Heart left ventricle (tissue), 16 donors: ENCODE measurements at regions of chr7 and their contacts with region 1.

Region 1: DNA sequence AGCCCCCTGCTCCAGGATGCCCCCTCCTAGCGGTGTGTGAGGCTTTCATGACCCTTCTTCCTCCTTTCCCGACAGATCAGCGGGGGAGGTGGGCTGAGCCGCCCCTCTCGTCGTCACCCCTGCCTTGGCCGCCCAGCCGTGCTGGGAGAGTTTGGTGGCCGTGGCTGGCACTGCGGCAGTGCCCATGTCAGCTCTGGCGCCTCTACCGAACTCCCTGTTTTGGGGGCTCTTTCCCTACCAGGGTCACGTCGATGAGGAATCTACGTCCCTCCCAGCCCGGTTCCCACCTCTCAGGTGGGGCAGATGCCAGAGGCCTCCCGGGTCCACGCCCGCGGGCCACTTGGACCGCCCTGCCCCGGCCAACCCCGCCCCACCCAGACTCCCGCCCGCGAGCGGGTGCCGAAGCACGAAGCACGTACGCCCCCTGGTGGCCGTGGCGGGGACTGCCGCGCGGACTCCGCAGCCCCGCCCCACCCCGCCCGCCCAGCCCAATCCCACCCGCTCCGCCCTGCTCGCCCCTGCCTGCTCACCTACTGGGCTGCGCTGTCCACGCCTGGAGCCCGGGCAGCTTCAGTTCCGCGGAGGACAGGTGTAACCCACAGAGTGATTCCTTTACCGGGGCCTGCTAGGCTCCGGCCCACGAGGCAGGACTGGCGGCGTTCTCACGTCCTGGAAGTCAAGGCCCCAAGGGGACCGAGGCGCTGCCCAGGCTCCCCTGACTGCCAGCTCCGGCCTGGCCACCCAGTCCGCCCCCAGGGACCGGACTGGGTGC is 127.1 kb downstream of the UBE2H start:
- DNase-seq: peak; percentile 87 to 95 (median 90)
- ATAC-seq: peak; percentile 59 to 88 (median 82)
- H3K4me3 ChIP-seq: peak overlapping the region; percentile 48 to 76 (median 59)
- H3K27ac ChIP-seq: peak overlapping the region in 8 of 12 donors; percentile 14 to 69 (median 48)
- H3K4me1 ChIP-seq: peaks cover 0 to 40% (median 24%) of the 10 kb centered on the region in 12 donors
- H3K27me3 ChIP-seq: no peaks in the 10 kb centered on the region
- CTCF ChIP-seq: peak; percentile 89 to 100 (median 95)
- POLR2A ChIP-seq: peak in 1 of 2 donors; percentile 9

Region 2: GRCh38 chr7:129343099-129343700 is 482.5 kb before region 1 on chr7:
- intact Hi-C with region 1: loop called in 1 of 10 experiments (anchors 10 kb)
- DNase-seq: no peak
- ATAC-seq: no peak
- H3K4me3 ChIP-seq: no peak overlapping the region
- H3K27ac ChIP-seq: no peak overlapping the region
- H3K4me1 ChIP-seq: no peaks in the 10 kb centered on the region
- H3K27me3 ChIP-seq: no peaks in the 10 kb centered on the region
- CTCF ChIP-seq: peak; percentile 52 to 79 (median 66)
- POLR2A ChIP-seq: no peak

Region 3: GRCh38 chr7:129494041-129494440 is 331.6 kb before region 1 on chr7:
- intact Hi-C with region 1: loop called in 1 of 10 experiments (anchors 5 kb)
- DNase-seq: no peak
- ATAC-seq: no peak
- H3K4me3 ChIP-seq: no peak overlapping the region
- H3K27ac ChIP-seq: no peak overlapping the region
- H3K4me1 ChIP-seq: no peaks in the 10 kb centered on the region
- H3K27me3 ChIP-seq: no peaks in the 10 kb centered on the region
- CTCF ChIP-seq: no peak
- POLR2A ChIP-seq: no peak

Region 4: GRCh38 chr7:129649128-129649690 is 176.5 kb before region 1 on chr7:
- intact Hi-C with region 1: no loop called
- DNase-seq: no peak
- ATAC-seq: no peak
- H3K4me3 ChIP-seq: no peak overlapping the region
- H3K27ac ChIP-seq: no peak overlapping the region
- H3K4me1 ChIP-seq: peaks cover 0 to 23% (median 5%) of the 10 kb centered on the region in 12 donors
- H3K27me3 ChIP-seq: no peaks in the 10 kb centered on the region
- CTCF ChIP-seq: no peak
- POLR2A ChIP-seq: no peak

Region 5: DNA sequence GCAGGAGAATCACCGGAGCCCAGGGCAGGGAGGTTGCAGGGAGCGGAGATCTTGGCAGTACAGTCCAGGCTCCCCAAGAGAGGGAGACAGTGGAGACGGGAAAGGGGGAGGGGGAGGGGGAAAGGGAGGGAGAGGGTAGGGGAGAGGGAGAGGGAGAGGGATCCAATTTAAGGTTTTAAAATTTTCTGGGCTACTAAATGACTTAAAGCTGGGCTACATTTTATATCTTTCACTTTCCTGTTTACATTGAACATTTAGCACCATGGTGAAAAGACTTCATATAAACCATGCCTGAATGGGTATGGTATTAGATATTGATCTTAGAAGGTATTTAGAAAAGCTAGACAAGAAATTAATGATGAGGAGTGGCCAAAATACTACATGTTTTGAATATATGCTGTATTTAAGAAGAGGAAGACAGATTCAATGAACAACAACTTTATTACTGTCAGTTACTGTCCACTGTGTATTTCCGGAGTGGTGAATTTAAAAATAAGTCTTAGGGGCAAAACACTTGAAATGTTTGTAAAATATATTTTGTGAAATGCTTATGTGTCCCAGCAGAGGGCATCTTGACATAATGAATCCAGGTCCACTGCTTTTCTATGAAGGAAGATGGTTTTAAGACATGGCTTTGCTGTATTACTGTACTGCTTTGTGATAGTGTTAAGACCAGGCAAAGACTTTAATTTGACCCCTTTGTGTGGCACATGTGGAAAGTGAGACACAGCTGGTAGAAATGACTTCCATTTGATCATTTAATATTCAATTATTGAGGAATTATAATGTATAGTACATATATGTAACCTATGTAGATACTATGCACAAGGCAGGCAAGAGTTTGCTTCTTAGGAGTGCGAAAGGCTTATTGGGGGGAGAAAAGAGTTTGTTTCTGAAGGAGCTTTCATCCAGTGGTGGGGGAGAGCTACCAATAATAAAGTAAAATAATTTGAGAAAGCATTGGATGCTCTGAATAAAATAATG is 161.4 kb before region 1 on chr7:
- intact Hi-C with region 1: loop called in 9 of 10 experiments (anchors 1 to 5 kb)
- DNase-seq: no peak
- ATAC-seq: peak in 2 of 4 donors; percentile 36 to 45
- H3K4me3 ChIP-seq: no peak overlapping the region
- H3K27ac ChIP-seq: no peak overlapping the region
- H3K4me1 ChIP-seq: peaks cover 0 to 6% (median 0%) of the 10 kb centered on the region in 12 donors
- H3K27me3 ChIP-seq: no peaks in the 10 kb centered on the region
- CTCF ChIP-seq: peak in 11 of 12 donors; percentile 16 to 58 (median 46)
- POLR2A ChIP-seq: no peak

Region 6: DNA sequence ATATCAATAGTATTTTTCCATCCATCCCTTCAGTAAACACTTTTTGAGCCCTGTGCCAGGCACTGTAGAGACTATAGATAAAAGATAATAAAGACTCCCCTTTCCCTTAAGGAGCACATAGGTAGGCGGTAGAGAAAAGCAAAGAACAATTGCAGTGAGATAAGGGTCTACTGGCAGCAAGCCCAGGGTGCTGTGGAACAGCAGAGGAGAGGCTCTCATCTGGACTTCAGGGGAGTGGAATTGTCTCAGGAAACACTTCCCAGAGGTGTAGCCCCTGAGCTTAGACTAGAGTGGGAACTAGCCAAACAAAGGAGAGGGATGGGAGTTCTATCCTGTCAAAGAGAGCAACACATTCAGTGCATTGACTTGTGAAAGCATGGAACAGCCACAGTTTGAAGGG is 112.1 kb before region 1 on chr7:
- intact Hi-C with region 1: no loop called
- DNase-seq: no peak
- ATAC-seq: peak in 1 of 4 donors; percentile 22
- H3K4me3 ChIP-seq: no peak overlapping the region
- H3K27ac ChIP-seq: no peak overlapping the region
- H3K4me1 ChIP-seq: peaks cover 0 to 6% (median 0%) of the 10 kb centered on the region in 12 donors
- H3K27me3 ChIP-seq: no peaks in the 10 kb centered on the region
- CTCF ChIP-seq: no peak
- POLR2A ChIP-seq: no peak

Region 7: DNA sequence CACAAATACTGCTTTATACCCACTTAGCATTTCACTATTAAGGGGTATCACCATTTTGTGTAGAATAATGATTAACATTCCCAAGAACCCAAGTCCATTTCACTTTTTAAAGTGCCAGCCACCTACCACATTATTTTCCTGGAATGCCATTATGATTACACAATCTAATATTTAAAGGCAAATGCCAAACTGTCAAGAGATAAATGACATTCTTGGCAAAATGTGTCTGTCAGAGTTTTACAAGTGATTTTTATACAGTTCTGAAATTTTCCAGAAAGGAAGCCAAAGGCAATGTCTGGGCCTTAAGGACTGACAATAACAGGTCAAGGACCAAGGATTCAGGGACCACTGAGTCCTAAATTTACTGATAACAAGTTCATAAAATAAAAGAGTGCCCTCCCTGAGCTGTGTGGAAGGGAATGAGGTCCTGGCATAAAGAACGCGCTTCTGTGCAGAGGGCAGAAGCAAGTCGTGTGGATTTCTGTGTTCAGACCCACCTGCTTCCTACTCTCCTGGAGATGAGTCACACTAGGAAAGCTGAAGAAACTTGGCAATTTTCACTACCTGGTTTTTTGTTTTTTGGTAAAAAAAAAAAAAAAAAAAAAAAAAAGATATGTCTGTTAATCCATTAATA is 60.6 kb after region 1 on chr7:
- intact Hi-C with region 1: no loop called
- DNase-seq: no peak
- ATAC-seq: peak in 3 of 4 donors; percentile 42 to 59 (median 49)
- H3K4me3 ChIP-seq: no peak overlapping the region
- H3K27ac ChIP-seq: peak overlapping the region in 10 of 12 donors; percentile 15 to 69 (median 46)
- H3K4me1 ChIP-seq: peaks cover 0 to 49% (median 22%) of the 10 kb centered on the region in 12 donors
- H3K27me3 ChIP-seq: no peaks in the 10 kb centered on the region
- CTCF ChIP-seq: no peak
- POLR2A ChIP-seq: no peak

Region 8: GRCh38 chr7:129896568-129897382 is 71.1 kb after region 1 on chr7:
- intact Hi-C with region 1: no loop called
- DNase-seq: no peak
- ATAC-seq: no peak
- H3K4me3 ChIP-seq: no peak overlapping the region
- H3K27ac ChIP-seq: no peak overlapping the region
- H3K4me1 ChIP-seq: peaks cover 0 to 53% (median 32%) of the 10 kb centered on the region in 12 donors
- H3K27me3 ChIP-seq: no peaks in the 10 kb centered on the region
- CTCF ChIP-seq: no peak
- POLR2A ChIP-seq: no peak

Region 9: GRCh38 chr7:129952653-129953560 is 127.2 kb after region 1 on chr7 and contains the start of gene UBE2H:
- intact Hi-C with region 1: loop called in 8 of 10 experiments (anchors 2 to 5 kb)
- DNase-seq: peak; percentile 91 to 97 (median 92)
- ATAC-seq: peak; percentile 83 to 93 (median 86)
- H3K4me3 ChIP-seq: peak within 1 kb of the TSS; percentile 61 to 99 (median 87)
- H3K27ac ChIP-seq: peak within 1 kb of the TSS; percentile 93 to 99 (median 96)
- H3K4me1 ChIP-seq: peaks cover 7 to 39% (median 21%) of the 10 kb centered on the region in 12 donors
- H3K27me3 ChIP-seq: no peaks in the 10 kb centered on the region
- CTCF ChIP-seq: no peak
- POLR2A ChIP-seq: peak; percentile 98 to 99
- total RNA-seq, gene UBE2H: 92.8 to 219 (median 130) TPM

Region 10: DNA sequence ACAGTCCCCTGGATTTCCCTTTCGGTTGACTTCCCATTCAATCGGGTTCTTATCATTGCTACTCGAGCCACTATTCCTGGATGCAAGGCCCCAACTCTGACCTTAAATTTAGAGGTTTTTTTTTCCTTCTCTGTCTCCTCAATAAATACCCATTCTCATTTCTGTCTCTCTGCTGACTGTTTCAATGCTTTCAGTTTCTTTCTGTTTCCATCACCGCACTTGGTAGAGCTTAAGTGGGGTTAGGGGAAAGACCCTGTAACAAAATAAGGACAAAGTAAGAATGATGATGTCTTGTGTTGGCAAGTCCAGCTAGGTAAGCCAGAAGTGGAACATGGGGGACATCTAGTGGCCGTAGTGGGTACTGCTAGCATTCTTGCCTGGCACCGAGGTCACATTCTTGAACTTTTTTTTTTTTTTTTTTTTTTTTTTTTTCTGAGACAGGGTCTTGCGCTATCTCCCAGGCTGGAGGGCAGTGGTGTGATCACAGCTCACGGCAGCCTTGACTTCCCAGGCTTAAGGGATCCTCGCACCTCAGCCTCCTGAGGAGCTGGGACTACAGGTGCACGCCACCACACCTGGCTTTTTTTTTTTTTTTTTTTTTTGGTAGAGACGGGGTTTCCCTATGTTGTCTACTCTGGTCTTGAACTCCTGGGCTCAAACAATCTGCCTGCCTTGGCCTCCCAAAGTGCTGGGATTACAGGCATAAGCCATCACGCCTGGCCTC is 185.2 kb after region 1 on chr7:
- intact Hi-C with region 1: loop called (anchors 1 to 5 kb)
- DNase-seq: peak in 4 of 5 donors; percentile 61 to 82 (median 70)
- ATAC-seq: peak; percentile 49 to 66 (median 58)
- H3K4me3 ChIP-seq: no peak overlapping the region
- H3K27ac ChIP-seq: peak overlapping the region in 5 of 12 donors; percentile 34 to 55 (median 41)
- H3K4me1 ChIP-seq: peaks cover 0 to 23% (median 5%) of the 10 kb centered on the region in 12 donors
- H3K27me3 ChIP-seq: no peaks in the 10 kb centered on the region
- CTCF ChIP-seq: peak; percentile 86 to 95 (median 92)
- POLR2A ChIP-seq: no peak